Posterior cingulate gyrus (tissue), 11 donors: ENCODE measurements at regions of chr20 and their contacts with region 1.

Region 1: GRCh38 chr20:59222253-59223181 is 58.9 kb downstream of the ZNF831 start:
- DNase-seq: peak; percentile 60 to 97 (median 82)

Region 2: DNA sequence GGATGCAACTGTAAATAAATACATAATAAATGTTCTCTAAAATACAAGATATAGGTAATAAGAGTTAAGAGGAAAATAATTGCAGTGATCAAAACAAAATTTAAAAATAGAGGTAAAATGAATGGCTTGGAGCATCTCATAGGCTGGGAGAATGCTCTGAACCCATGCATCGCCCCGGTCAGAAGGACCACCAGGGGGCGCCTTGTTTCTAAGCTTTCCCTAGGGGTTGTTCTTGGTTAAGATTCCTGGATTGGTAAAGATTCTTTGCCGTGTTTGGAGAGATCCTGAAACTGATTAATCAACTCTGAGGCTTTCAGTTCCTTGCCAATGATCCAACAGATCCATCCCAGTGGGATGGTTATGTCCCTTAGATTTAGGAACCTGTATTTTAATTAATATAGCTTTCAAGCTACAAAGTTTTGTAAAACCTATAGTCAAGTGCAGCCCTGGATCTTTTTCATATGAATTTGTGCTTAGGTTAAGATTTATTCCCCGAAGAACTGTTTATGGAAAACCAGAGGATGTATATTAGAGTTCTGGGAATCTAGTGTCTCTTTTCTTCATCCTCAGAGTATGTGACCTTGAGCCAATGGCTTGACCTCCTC is 134.6 kb before region 1 on chr20:
- intact Hi-C with region 1: loop called (anchors 2 kb)
- DNase-seq: peak; percentile 46 to 96 (median 88)

Region 3: DNA sequence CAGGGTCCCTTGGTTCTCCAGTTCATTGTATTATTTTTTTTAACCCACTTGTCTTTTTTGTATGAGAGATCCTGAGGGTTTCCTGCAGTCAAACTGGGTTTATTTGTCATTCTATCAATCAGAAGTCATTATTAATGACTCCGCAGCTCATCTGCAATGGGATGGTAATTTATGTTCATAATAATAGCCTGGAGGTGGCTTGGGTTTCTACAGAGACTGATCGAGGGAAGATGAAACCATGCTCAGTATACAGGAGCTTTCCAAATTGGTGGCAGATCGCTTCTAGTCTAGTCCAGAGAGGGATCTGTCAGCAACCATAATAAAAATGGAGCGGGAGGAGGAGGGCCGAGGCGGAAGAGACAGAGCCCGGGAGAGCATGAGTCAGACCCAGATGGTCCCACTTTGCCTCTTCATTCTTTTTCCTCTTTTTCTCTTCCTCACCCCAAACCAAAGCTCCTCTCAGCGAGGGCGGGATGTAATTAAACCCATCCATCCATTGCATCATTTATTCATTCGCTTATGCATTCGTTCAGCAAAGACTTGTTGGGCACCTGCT is 100.5 kb after region 1 on chr20:
- intact Hi-C with region 1: no loop called
- DNase-seq: peak in 4 of 10 donors; percentile 22 to 89 (median 58)

Region 4: GRCh38 chr20:59403261-59403961 is 180.9 kb after region 1 on chr20:
- intact Hi-C with region 1: loop called (anchors 5 kb)
- DNase-seq: peak; percentile 51 to 96 (median 74)

Region 5: GRCh38 chr20:59495894-59496510 is 273.5 kb after region 1 on chr20:
- intact Hi-C with region 1: loop called (anchors 10 kb)
- DNase-seq: peak; percentile 57 to 96 (median 78)